ENCODE measurements at regions of chr16 and their contacts with region 1.

Region 1: GRCh38 chr16:3123986-3124886 is 10.6 kb upstream of the ZNF213 start:
- DNase-seq: peak; percentile 98
- ATAC-seq: peak; percentile 86
- H3K4me3 Mint-ChIP-seq: peak overlapping the region; percentile 97
- H3K27ac Mint-ChIP-seq: peak overlapping the region; percentile 98
- H3K4me1 Mint-ChIP-seq: peaks cover 28% of the 10 kb centered on the region
- H3K27me3 Mint-ChIP-seq: no peaks in the 10 kb centered on the region

Region 2: DNA sequence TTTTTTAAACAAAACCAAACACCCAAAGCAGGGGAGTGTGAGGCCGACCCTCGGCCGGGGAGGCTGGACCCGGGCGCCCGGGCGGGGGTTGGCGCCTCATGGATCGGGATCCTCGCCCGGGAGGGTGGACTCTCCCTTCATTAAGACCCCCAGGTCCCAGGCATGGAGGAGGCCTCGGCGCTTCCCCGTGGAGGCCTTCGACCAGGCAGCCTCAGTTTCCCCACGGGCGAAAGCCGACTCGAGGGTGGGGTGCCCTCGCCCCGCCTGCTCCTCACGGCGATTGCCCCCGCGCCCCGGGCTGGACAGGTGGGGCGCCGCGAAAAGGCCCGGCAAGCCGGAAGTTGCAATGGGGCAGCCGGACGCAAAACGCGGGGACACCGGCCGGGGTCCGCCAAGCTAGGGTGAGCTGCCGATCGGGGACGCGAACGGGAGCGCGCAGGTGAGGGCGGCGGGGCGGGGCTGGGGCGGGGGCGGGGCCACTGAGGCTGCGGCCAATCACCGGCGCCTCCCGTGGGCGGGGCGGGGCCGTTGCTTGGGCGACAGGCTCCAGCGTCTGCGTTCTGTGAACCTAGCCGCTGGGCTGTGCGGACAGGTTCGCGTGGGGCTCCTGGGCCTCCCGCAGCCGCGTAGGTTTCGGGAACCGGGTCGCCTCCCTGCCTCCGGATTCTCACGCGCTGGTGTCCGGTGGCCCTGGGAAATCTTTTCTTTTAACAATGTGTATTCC is 17.9 kb before region 1 on chr16:
- POLR2A ChIA-PET with region 1: interaction called, 27 read pairs
- DNase-seq: peak; percentile 95
- ATAC-seq: peak; percentile 89
- H3K4me3 Mint-ChIP-seq: peak overlapping the region; percentile 82
- H3K27ac Mint-ChIP-seq: peak overlapping the region; percentile 89
- H3K4me1 Mint-ChIP-seq: peaks cover 20% of the 10 kb centered on the region
- H3K27me3 Mint-ChIP-seq: peaks cover 2% of the 10 kb centered on the region

Region 3: DNA sequence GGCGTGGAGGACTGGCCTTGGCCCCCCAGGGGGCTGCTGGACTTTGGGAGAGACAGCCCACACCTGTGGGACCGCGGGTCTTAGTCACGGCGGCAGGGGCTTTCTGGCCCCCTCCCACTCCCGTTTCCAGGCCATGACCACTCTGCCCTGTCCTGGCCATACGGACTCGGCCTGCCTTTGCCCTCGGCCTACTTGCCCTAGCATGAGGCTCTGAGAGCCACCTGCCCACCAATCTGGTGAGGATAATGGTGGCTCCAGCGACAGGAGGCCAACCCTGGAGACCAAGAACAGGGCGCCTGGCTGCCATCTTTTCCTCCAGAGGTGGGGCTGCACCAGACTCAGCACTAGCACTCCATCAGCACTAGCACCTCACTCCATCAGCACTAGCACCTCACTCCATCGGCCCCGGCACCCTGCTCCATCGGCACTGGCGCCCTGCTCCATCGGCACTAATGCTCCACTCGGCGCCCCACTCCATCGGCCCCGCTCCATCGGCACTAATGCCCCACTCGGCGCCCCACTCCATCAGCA is 17.6 kb after region 1 on chr16:
- POLR2A ChIA-PET with region 1: no interaction called
- DNase-seq: no peak
- ATAC-seq: no peak
- H3K4me3 Mint-ChIP-seq: no peak overlapping the region
- H3K27ac Mint-ChIP-seq: no peak overlapping the region
- H3K4me1 Mint-ChIP-seq: peaks cover 2% of the 10 kb centered on the region
- H3K27me3 Mint-ChIP-seq: no peaks in the 10 kb centered on the region

Measured in activated naive CD8-positive, alpha-beta T cell treated with anti-CD3 and anti-CD28 coated beads, Interleukin-2, amount 10 ng/mL, durations not matched to agents 7 days and 5 days (primary cell).